Endothelial cell of umbilical vein (primary cell): ENCODE measurements at regions of chr1 and their contacts with region 1.

Region 1: DNA sequence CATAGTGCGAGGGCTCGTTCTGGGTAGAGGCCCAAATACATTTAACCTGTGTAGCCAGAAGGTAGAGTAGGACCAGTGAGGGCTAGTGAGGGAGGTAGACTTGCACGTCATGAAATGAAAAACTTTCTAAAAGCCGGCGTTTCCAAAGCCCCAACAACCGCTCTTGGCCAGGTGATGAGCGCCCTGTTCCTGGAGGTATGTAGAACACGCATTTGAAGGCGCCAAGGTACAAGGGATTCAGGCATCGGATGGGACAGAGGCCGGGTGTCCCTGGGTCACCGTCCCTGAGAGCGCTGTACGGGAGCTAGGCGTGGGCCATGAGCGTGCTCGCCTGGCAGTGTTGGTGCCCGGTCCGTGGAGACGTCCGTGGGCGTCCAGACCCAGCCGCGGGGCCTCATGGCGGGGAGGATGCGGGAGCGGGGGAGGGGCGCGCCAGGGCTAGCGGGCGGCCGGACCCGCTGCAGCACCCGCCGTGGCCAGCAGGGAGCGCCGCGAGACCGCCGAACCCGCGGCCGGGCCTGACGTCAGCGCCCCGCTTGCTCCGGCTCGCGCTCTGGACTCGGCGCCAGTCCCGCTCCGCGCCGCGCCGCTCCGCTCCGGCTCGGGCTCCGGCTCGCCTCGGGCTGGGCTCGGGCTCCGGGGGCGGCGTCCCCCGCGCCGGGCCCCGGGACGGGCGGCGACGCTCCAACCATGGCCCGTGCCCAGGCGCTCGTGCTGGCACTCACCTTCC is at the start of gene PTPRU:
- DNase-seq: peak; percentile 59
- H3K4me3 ChIP-seq: peak within 1 kb of the TSS in 2 of 3 experiments; percentile 6 to 33
- H3K27ac ChIP-seq: no peak within 1 kb of the TSS
- H3K4me1 ChIP-seq: peaks cover 16% of the 10 kb centered on the region
- H3K27me3 ChIP-seq: peaks cover 34 to 40% of the 10 kb centered on the region in 2 experiments
- CTCF ChIP-seq: peak; percentile 62 to 83
- POLR2A ChIP-seq: no peak
- total RNA-seq, gene PTPRU: 2.6 and 3.3 TPM in 2 replicates

Region 2: GRCh38 chr1:29282924-29283811 is 47.0 kb after region 1 on chr1:
- CTCF ChIA-PET with region 1: no interaction called
- POLR2A ChIA-PET with region 1: no interaction called
- dilution Hi-C with region 1: no loop called
- intact Hi-C with region 1: no loop called
- DNase-seq: peak; percentile 22
- H3K4me3 ChIP-seq: no peak overlapping the region
- H3K27ac ChIP-seq: no peak overlapping the region
- H3K4me1 ChIP-seq: no peaks in the 10 kb centered on the region
- H3K27me3 ChIP-seq: no peaks in the 10 kb centered on the region
- CTCF ChIP-seq: no peak
- POLR2A ChIP-seq: no peak

Region 3: DNA sequence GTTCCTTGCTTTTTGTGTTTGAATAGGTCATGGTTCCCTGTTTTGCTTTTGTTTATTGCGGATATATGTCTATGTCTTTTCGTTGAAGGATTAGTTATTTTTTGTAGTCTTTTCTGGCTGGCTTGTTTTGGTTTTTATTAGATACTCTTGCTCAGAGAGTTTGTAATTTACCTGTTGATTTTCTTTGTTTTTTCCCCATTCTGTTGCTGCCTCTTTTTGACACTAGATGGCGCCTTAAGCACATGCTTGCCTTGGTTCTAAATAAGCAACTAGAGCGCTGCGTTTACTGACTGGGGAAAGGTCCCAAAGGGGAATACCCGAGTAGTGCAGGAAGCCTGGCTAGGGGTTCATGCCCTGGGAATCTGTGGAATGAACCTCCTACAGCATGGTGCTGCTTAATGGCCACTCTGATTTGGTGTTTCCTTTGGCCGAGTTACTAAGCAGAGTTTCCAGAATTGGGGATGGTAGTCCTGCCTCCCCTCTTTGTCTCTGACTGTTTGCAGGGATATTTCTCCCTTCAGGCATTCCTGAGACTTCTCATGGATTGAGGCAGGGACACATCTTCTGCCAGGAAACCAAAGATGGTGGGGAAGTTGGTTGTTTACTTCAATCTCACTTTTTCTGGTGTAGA is 143.4 kb after region 1 on chr1:
- CTCF ChIA-PET with region 1: no interaction called
- POLR2A ChIA-PET with region 1: interaction called, 4 read pairs
- dilution Hi-C with region 1: no loop called
- intact Hi-C with region 1: loop called (anchors 5 kb)
- DNase-seq: peak; percentile 65
- H3K4me3 ChIP-seq: no peak overlapping the region
- H3K27ac ChIP-seq: no peak overlapping the region
- H3K4me1 ChIP-seq: peaks cover 13% of the 10 kb centered on the region
- H3K27me3 ChIP-seq: no peaks in the 10 kb centered on the region
- CTCF ChIP-seq: peak; percentile 62 to 68
- POLR2A ChIP-seq: no peak

Region 4: GRCh38 chr1:29513357-29513756 is 277.2 kb after region 1 on chr1:
- CTCF ChIA-PET with region 1: no interaction called
- POLR2A ChIA-PET with region 1: no interaction called
- dilution Hi-C with region 1: no loop called
- intact Hi-C with region 1: loop called (anchors 2 kb)
- DNase-seq: peak; percentile 45
- H3K4me3 ChIP-seq: no peak overlapping the region
- H3K27ac ChIP-seq: no peak overlapping the region
- H3K4me1 ChIP-seq: no peaks in the 10 kb centered on the region
- H3K27me3 ChIP-seq: no peaks in the 10 kb centered on the region
- CTCF ChIP-seq: peak; percentile 50 to 51
- POLR2A ChIP-seq: no peak

Region 5: DNA sequence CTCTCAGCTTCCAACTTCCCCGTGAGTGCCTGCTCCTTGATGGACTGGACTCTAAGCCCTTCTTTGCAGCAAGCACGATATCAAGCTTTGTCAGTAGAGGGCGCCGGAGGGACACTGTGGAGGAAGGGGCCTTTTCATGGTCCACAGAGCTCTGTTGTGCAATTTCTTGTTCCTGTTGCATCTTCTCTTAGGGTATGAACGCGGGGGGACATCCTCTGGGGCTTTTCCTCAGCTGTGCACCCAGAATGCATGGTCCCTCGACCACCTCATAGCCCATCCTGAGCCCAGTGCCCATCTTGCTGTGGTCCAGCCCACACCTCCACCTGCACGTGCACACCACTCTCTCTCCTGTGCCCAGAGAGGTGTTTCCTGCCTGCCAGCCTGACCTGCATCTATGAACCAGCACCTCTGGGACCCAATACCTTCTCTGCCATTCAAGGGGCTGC is 557.0 kb after region 1 on chr1:
- CTCF ChIA-PET with region 1: no interaction called
- POLR2A ChIA-PET with region 1: no interaction called
- dilution Hi-C with region 1: no loop called
- intact Hi-C with region 1: loop called (anchors 1 kb)
- DNase-seq: peak; percentile 72
- H3K4me3 ChIP-seq: no peak overlapping the region
- H3K27ac ChIP-seq: no peak overlapping the region
- H3K4me1 ChIP-seq: no peaks in the 10 kb centered on the region
- H3K27me3 ChIP-seq: no peaks in the 10 kb centered on the region
- CTCF ChIP-seq: peak; percentile 75 to 87
- POLR2A ChIP-seq: no peak

Region 6: DNA sequence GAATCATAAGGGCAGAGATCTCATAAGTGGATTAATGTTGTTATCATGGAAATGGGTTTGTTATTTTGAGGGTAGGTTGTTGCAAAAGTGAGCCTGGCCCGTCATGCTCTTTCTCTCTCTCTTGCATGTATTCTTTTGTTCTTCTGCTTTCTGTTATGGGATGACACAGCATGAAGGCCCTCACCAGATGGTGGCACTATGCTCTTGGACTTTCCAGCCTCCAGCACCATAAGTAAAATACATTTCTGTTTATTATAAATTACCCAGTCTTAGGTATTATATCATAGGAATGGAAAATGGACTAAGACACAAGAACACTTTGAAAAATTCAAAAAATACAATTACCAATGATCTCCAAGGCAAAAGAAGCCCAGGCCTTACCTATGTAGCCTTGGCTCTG is 676.3 kb after region 1 on chr1:
- CTCF ChIA-PET with region 1: no interaction called
- POLR2A ChIA-PET with region 1: no interaction called
- dilution Hi-C with region 1: no loop called
- intact Hi-C with region 1: no loop called
- DNase-seq: peak; percentile 6
- H3K4me3 ChIP-seq: no peak overlapping the region
- H3K27ac ChIP-seq: no peak overlapping the region
- H3K4me1 ChIP-seq: no peaks in the 10 kb centered on the region
- H3K27me3 ChIP-seq: no peaks in the 10 kb centered on the region
- CTCF ChIP-seq: peak; percentile 8 to 13
- POLR2A ChIP-seq: no peak

Region 7: DNA sequence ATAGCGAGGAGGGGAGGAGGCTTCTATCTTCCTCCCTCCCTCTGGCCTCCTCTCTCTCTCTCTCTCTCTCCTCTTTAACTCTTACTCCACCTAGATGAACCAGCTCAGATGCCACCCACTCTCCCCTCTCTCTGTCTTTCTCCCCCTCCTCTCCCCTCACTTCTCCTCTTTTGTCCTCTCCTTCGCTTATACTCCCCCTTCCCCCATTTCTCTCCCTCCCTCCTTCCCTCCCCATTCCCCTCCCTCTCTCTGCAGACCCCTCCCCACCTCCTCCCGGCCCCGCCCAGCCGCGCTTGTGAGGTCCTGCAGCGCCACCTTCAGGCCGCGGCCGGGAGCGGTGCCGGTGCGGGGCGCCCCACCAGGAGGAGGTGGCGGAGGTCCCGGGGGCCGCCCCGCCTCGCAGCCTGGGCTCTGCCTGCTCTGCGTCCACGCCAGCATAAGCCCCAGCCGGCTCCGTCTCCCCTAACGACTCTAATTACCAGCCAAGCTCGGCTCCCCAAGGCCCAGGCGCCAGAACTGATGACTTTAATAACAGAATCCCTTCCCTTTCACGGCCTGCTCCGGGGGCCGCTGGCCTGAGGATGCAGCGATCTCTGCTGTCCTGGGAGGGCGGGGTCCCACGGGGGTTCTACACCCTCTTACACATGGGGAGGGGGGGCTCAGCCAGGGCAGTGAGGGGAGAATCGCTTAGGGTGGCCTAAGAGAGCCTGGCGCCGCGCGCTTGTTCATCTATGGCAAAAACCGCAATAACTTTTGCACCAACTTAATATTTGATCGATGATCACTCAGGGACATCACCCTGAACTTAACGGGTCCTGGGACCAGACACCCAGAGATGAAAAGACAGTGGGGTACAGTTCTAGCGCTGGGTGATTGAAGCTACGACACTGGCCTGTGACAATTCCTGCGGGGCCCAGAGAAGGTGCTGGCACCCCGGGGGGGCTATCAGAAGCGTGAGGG is 850.0 kb after region 1 on chr1:
- CTCF ChIA-PET with region 1: no interaction called
- POLR2A ChIA-PET with region 1: no interaction called
- dilution Hi-C with region 1: loop called (anchors 25 kb)
- intact Hi-C with region 1: loop called (anchors 1 kb)
- DNase-seq: peak; percentile 17
- H3K4me3 ChIP-seq: no peak overlapping the region
- H3K27ac ChIP-seq: no peak overlapping the region
- H3K4me1 ChIP-seq: peaks cover 17% of the 10 kb centered on the region
- H3K27me3 ChIP-seq: no peaks in the 10 kb centered on the region
- CTCF ChIP-seq: peak; percentile 52 to 64
- POLR2A ChIP-seq: no peak

Region 8: GRCh38 chr1:30379684-30380624 is 1143.8 kb after region 1 on chr1:
- CTCF ChIA-PET with region 1: interaction called, 16 read pairs
- POLR2A ChIA-PET with region 1: no interaction called
- dilution Hi-C with region 1: no loop called
- intact Hi-C with region 1: loop called (anchors 1 kb)
- DNase-seq: peak; percentile 50
- H3K4me3 ChIP-seq: no peak overlapping the region
- H3K27ac ChIP-seq: no peak overlapping the region
- H3K4me1 ChIP-seq: no peaks in the 10 kb centered on the region
- H3K27me3 ChIP-seq: no peaks in the 10 kb centered on the region
- CTCF ChIP-seq: peak; percentile 73 to 76
- POLR2A ChIP-seq: no peak

Region 9: DNA sequence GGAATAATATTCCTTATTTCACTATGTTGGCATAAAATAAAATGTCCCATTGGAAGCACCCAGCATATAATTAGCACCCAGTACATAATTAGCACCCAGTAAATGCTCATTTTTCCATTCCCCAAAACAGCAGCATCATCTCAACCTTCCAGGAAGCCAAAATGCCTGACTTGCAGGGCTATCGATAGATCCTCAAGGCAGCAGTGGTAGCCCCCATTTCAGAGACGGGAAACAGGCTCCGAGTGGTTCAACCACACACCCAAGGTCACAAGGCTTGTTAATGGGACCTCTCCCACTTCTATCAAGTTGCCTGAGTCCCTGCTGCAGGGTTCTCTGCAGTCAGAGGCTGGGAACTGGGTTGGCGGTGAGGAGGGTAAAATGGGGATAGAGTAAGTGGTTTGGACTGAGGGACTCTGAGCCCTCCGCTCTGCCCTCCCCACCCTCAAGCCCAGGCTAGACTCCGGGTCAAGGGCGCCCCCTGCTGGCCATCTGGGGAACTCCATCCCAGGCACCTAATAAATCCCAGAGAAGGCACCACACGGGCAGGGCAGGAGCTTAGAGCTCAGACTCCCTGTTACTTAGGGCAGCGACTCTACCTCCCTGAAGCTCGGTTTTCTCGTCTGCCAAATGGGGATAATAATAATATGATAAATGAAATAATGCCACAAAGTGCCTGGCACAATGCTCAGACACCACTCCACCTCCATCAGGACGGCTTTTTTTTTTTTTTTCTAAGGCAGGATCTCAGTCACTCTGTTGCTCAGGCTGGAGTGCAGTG is 1543.4 kb after region 1 on chr1:
- CTCF ChIA-PET with region 1: interaction called, 4 read pairs
- POLR2A ChIA-PET with region 1: no interaction called
- dilution Hi-C with region 1: no loop called
- intact Hi-C with region 1: loop called (anchors 1 kb)
- DNase-seq: peak; percentile 78
- H3K4me3 ChIP-seq: no peak overlapping the region
- H3K27ac ChIP-seq: no peak overlapping the region
- H3K4me1 ChIP-seq: peaks cover 7% of the 10 kb centered on the region
- H3K27me3 ChIP-seq: peaks cover 0 to 3% of the 10 kb centered on the region in 2 experiments
- CTCF ChIP-seq: peak; percentile 90 to 93
- POLR2A ChIP-seq: no peak